ENCODE measurements at regions of chr18 and their contacts with region 1.

Region 1: DNA sequence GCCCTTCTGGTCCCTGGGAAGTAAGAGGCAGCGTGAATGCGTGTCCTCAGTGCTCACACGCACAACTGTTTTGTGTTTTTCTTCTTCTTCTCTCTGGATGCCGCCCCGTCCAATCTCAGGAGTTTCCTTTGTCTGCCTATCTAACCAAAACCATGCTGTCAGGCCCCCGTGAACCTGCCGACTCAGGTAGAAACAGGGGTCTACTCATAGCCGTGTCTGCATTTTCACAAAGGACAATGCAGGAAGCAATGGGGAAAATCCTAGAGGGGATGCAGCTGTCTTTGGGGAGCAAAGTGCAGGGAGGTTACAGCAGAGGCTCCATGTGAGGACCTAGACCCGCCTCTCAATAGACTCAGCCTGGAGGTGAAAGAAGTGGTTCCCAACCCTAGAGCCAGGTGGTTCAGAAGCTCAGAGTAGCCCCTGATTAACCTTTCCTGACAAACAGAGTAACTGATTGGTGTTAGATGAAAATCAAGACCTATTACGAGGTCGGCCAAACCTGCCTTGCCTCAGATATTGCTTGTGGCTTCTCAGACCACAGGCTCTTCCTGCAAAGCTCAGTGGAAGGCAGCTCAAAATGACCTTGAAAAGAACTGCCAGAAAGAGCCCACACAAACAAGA is 49.3 kb downstream of the CD226 start:
- DNase-seq: no peak
- ATAC-seq: peak; percentile 63
- H3K4me3 ChIP-seq: peak overlapping the region; percentile 43; the same call in 1 of the 2 replicates
- H3K27ac ChIP-seq: peak overlapping the region; percentile 84
- H3K4me1 ChIP-seq: peaks cover 31% of the 10 kb centered on the region
- H3K27me3 ChIP-seq: no peaks in the 10 kb centered on the region
- CTCF ChIP-seq: no peak
- EP300 ChIP-seq: no peak
- POLR2A ChIP-seq: no peak
- RAD21 ChIP-seq: no peak

Region 2: GRCh38 chr18:69265656-69266055 is 632.7 kb before region 1 on chr18:
- CTCF ChIA-PET with region 1: no interaction called
- POLR2A ChIA-PET with region 1: no interaction called
- RAD21 ChIA-PET with region 1: no interaction called
- SMC1A ChIA-PET with region 1: no interaction called
- in situ Hi-C with region 1: no loop called
- intact Hi-C with region 1: no loop called
- DNase-seq: no peak
- ATAC-seq: no peak
- H3K4me3 ChIP-seq: no peak overlapping the region
- H3K27ac ChIP-seq: no peak overlapping the region
- H3K4me1 ChIP-seq: no peaks in the 10 kb centered on the region
- H3K27me3 ChIP-seq: no peaks in the 10 kb centered on the region
- CTCF ChIP-seq: no peak
- EP300 ChIP-seq: no peak
- POLR2A ChIP-seq: no peak
- RAD21 ChIP-seq: no peak

Region 3: GRCh38 chr18:69518989-69519388 is 379.4 kb before region 1 on chr18:
- CTCF ChIA-PET with region 1: no interaction called
- POLR2A ChIA-PET with region 1: no interaction called
- RAD21 ChIA-PET with region 1: no interaction called
- SMC1A ChIA-PET with region 1: no interaction called
- in situ Hi-C with region 1: no loop called
- intact Hi-C with region 1: no loop called
- DNase-seq: no peak
- ATAC-seq: no peak
- H3K4me3 ChIP-seq: no peak overlapping the region
- H3K27ac ChIP-seq: no peak overlapping the region
- H3K4me1 ChIP-seq: no peaks in the 10 kb centered on the region
- H3K27me3 ChIP-seq: no peaks in the 10 kb centered on the region
- CTCF ChIP-seq: no peak
- EP300 ChIP-seq: no peak
- POLR2A ChIP-seq: no peak
- RAD21 ChIP-seq: no peak

Region 4: DNA sequence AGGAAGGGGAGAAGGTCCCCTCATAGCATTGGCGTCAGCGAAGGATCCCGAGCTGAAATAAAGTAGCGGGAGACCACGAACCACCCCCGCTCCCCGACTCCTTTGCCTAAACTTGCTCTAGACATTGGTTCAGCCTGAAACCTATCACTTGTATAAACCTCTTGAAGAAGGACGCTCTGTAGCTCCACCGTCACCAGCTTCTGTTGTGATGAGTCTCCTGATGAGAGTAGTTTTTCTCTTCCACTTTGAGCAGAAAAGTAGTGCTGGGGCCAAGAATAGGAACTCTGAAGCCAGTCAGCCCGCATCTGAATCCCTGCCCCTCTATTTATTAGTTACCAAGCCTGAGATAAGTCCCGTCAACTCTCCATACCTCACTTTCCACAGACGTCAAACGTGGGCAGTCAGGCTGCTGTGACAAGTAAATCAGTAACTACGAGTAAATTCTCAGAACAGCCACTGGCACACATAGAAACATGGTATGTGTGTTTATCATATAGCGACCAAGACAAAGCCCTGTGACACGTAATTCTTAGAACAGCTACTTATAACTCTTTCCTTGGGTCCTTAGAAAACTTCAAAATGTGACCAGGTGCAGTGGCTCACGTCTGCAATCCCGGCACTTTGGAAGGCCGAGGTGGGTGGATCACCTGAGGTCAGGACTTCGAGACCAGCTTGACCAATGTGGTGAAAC is 12.4 kb before region 1 on chr18:
- CTCF ChIA-PET with region 1: interaction called, 7 read pairs
- POLR2A ChIA-PET with region 1: interaction called, 6 read pairs
- RAD21 ChIA-PET with region 1: interaction called, 12 read pairs
- SMC1A ChIA-PET with region 1: interaction called, 23 read pairs
- in situ Hi-C with region 1: no loop called
- intact Hi-C with region 1: loop called (anchors 1 kb)
- DNase-seq: peak; percentile 72
- ATAC-seq: peak; percentile 79
- H3K4me3 ChIP-seq: no peak overlapping the region
- H3K27ac ChIP-seq: peak overlapping the region; percentile 60
- H3K4me1 ChIP-seq: no peaks in the 10 kb centered on the region; the same call in 1 of the 2 replicates
- H3K27me3 ChIP-seq: no peaks in the 10 kb centered on the region
- CTCF ChIP-seq: no peak
- EP300 ChIP-seq: peak; percentile 97 to 98
- POLR2A ChIP-seq: no peak
- RAD21 ChIP-seq: no peak

Region 5: DNA sequence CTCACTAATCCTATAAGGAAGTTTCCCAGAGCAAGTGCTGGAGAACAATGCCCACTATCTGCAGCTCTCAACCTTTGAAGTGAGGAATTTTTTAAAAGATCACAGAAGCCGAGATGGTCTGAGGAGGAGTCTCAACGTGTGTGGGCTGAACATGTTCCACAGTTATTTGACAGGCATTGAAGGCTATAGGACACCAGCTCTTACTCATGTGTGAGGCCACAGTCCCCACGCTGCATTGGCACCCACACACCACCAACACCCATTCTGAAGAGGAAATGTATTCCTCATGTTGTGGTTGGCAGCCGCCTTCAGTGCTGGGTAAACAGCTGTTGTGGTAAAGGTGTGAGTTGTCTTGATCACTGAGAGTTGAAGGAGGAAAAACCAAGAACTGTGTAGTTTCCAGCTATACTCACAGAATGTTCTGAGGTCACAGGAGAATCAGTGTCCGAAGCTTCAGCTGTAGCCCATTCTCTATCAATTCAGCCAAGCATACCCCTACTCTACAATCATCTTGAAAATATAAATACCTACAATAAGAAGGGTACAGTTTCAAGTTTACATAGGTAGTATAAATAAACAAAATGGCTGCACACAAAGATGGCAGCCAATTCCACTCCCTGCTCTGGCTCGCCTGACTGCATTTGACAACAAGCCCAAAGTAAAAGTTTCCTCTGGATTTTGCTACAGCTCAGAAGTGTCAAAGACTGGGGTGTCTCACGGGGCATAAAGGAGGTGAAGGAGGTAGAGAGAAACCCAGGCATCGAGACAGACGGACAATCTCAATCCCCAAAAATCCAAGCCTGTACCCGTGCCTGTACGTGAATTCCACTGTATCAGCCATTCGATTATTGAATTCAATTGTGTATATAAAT is 37.2 kb after region 1 on chr18:
- CTCF ChIA-PET with region 1: interaction called, 10 read pairs
- POLR2A ChIA-PET with region 1: interaction called, 9 read pairs
- RAD21 ChIA-PET with region 1: interaction called, 26 read pairs
- SMC1A ChIA-PET with region 1: interaction called, 33 read pairs
- in situ Hi-C with region 1: no loop called
- intact Hi-C with region 1: loop called (anchors 1 kb)
- DNase-seq: peak; percentile 89
- ATAC-seq: peak; percentile 92
- H3K4me3 ChIP-seq: no peak overlapping the region
- H3K27ac ChIP-seq: peak overlapping the region; percentile 88
- H3K4me1 ChIP-seq: peaks cover 40% of the 10 kb centered on the region
- H3K27me3 ChIP-seq: no peaks in the 10 kb centered on the region
- CTCF ChIP-seq: no peak
- EP300 ChIP-seq: peak; percentile 89 to 94
- POLR2A ChIP-seq: peak; percentile 57
- RAD21 ChIP-seq: no peak

Region 6: GRCh38 chr18:69958422-69958821 is 60.1 kb after region 1 on chr18:
- CTCF ChIA-PET with region 1: interaction called, 3 read pairs
- POLR2A ChIA-PET with region 1: no interaction called
- RAD21 ChIA-PET with region 1: interaction called, 7 read pairs
- SMC1A ChIA-PET with region 1: interaction called, 13 read pairs
- in situ Hi-C with region 1: no loop called
- intact Hi-C with region 1: loop called (anchors 2 kb)
- DNase-seq: no peak
- ATAC-seq: peak; percentile 62
- H3K4me3 ChIP-seq: no peak overlapping the region
- H3K27ac ChIP-seq: peak overlapping the region; percentile 70; the same call in 1 of the 2 replicates
- H3K4me1 ChIP-seq: peaks cover 36% of the 10 kb centered on the region
- H3K27me3 ChIP-seq: no peaks in the 10 kb centered on the region
- CTCF ChIP-seq: no peak
- EP300 ChIP-seq: peak in 1 of 2 experiments; percentile 25; a peak in 1 of 4 replicates
- POLR2A ChIP-seq: no peak
- RAD21 ChIP-seq: no peak

Region 7: DNA sequence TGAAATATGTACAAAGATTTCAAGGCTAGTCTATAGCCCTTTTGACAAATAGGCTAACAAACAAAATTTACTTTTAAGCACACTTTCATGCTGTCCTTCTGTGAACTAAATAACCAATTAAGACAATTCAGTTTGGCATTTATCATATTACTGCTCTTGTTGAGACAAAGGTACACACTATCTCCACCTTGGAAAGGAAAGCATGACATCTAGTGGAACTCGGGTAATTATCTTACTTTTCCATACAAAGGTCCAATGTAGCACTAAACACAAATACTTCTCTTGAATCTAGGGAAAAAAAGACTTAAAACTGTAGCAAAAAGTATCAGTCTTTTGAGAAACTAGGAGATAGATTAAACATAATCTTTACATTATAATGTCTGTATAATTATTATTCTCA is 174.3 kb after region 1 on chr18:
- CTCF ChIA-PET with region 1: no interaction called
- POLR2A ChIA-PET with region 1: no interaction called
- RAD21 ChIA-PET with region 1: interaction called, 3 read pairs
- SMC1A ChIA-PET with region 1: interaction called, 6 read pairs
- in situ Hi-C with region 1: no loop called
- intact Hi-C with region 1: loop called (anchors 5 kb)
- DNase-seq: no peak
- ATAC-seq: peak; percentile 66
- H3K4me3 ChIP-seq: no peak overlapping the region
- H3K27ac ChIP-seq: no peak overlapping the region
- H3K4me1 ChIP-seq: no peaks in the 10 kb centered on the region
- H3K27me3 ChIP-seq: no peaks in the 10 kb centered on the region
- CTCF ChIP-seq: peak; percentile 29 to 64 (median 32); a peak in 3 of 6 replicates
- EP300 ChIP-seq: no peak
- POLR2A ChIP-seq: no peak
- RAD21 ChIP-seq: peak; percentile 81

Measured in GM12878 (cell line).